Psoas muscle (tissue), 8 donors: ENCODE measurements at regions of chr14 and their contacts with region 1.

Region 1: GRCh38 chr14:20690848-20691523 is 2.4 kb downstream of the ANG start:
- DNase-seq: no peak
- ATAC-seq: peak; percentile 83 to 95 (median 89)
- H3K4me3 ChIP-seq: no peak overlapping the region
- H3K27ac ChIP-seq: no peak overlapping the region
- H3K4me1 ChIP-seq: peaks cover 4% of the 10 kb centered on the region
- H3K27me3 ChIP-seq: no peaks in the 10 kb centered on the region
- CTCF ChIP-seq: peak; percentile 87

Region 2: GRCh38 chr14:20327005-20327869 is 363.7 kb before region 1 on chr14:
- intact Hi-C with region 1: loop called (anchors 1 to 10 kb)
- DNase-seq: no peak
- ATAC-seq: peak in 3 of 4 donors; percentile 57 to 84 (median 59)
- H3K4me3 ChIP-seq: no peak overlapping the region
- H3K27ac ChIP-seq: no peak overlapping the region
- H3K4me1 ChIP-seq: peaks cover 21% of the 10 kb centered on the region
- H3K27me3 ChIP-seq: no peaks in the 10 kb centered on the region
- CTCF ChIP-seq: peak; percentile 85

Region 3: DNA sequence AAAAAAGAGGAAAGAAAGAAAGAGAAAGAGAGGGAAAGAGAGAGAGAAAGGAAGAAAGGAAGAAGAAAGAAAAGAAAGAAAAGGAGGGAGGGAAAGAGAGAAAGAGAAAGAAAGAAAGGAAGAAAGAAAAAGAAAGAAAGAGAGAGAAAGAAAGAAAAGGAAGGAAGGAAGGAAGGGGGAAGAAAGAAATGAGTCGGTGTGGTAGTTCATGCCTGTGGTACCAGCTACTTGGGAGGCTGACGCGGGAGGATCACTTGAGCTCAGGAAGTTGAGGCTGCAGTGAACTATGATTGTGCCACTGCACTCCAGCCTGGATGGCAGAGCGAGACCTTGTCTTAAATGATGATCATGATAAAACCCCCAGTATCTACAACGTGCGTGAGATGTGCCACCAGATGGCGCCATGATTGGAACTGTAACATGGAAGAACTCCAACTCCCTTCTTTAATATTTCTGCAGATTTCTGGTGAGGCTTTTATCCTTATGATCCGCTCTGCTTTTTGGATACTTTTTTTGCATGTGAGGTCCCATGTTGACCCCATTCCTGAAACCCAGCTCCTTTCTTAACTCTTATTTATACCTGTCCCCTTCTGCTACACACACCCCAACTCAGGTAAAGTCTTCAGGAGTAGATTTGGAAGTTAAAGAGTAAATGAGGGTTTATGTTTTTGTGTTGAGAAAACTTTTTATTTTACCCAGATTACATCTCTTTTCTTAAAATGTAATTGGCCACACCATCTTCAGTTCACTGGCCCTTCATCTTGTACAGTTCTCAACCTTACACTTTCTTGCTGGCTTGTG is 160.0 kb before region 1 on chr14:
- intact Hi-C with region 1: loop called (anchors 2 to 5 kb)
- DNase-seq: peak; percentile 67 to 76
- ATAC-seq: peak in 3 of 4 donors; percentile 58 to 71 (median 66)
- H3K4me3 ChIP-seq: no peak overlapping the region
- H3K27ac ChIP-seq: no peak overlapping the region
- H3K4me1 ChIP-seq: no peaks in the 10 kb centered on the region
- H3K27me3 ChIP-seq: peaks cover 0 to 4% (median 0%) of the 10 kb centered on the region in 3 donors
- CTCF ChIP-seq: peak; percentile 62

Region 4: GRCh38 chr14:20970983-20971704 is 280.2 kb after region 1 on chr14:
- intact Hi-C with region 1: loop called (anchors 10 kb)
- DNase-seq: peak; percentile 83 to 91
- ATAC-seq: peak; percentile 97 to 99 (median 98)
- H3K4me3 ChIP-seq: peak overlapping the region; percentile 75
- H3K27ac ChIP-seq: peak overlapping the region; percentile 53
- H3K4me1 ChIP-seq: peaks cover 4% of the 10 kb centered on the region
- H3K27me3 ChIP-seq: peaks cover 0 to 6% (median 2%) of the 10 kb centered on the region in 3 donors
- CTCF ChIP-seq: peak; percentile 85